Left cardiac atrium (tissue), 4 donors: ENCODE measurements at regions of chr4 and their contacts with region 1.

Region 1: DNA sequence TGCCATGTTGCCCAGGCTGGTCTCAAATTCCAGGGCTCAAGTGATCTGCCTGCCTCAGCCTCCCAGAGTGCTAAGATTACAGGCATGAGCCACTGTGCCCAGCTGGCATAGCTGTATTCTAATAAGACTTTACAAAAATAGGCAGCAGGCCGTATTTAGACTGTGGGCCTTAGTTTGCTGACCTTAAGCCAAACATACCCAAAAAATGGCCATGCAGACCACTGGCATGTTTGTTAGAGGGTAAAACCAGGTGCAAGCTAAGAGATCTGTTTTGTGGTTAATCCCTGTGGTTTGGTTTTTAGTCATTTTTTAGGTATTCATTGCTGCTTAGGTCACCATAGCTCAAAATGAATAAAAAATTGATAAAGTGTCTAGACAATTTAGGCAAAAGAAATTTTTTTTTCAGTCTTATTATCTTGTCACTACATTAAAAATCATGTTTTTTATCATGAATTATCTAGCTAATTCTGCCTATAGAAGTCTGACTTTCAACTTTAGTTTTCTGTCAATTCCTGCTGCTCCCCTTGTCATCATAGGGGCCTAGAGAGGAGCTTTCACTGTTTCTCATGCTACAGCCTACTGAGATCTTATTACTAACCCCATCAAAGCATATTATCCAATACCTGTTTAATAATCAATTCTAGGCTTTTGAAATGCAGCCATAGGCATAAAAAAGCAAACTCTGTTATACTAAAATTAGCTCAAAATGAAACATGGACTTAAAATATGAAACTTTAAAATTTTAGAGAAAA is 7.5 kb upstream of the SPINK2 start:
- DNase-seq: no peak
- ATAC-seq: no peak

Region 2: DNA sequence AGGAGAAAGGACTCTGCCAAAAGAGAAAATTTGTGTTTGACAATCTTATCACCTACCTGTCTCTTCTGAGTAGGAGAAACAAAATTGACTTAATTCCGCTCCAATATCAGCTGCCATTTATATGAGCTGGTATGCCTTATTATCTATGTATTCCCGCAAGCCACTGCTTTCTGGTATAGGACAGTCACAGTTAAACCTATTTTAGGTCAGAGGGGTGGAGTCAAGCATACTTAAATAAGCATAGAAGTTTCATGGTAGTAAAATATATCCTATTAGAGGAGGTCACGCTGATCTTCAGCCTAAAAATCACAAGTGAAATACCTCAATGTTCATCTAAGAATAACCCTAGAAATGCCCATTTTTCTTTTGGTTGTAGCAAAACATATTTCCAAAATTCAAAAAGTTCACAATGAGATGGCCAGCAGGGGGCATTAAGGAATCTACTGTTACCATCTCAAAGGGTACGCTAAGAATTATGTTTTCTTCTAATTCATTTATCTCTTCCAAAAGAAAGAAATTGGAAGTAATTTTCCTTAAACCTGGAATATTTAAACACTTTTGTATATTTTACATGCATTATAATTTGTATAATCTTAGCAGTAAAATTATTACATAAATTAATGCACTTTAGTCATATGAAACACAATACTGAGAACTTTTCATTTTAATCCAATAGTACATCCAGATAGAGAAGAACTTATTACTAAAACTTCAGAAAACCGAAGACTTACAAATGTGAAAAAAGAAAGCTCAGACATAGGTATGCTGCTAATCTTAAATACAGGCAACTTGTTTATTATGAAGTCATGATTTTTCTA is 404.1 kb before region 1 on chr4:
- intact Hi-C with region 1: loop called in 1 of 2 experiments (anchors 10 kb)
- DNase-seq: no peak
- ATAC-seq: peak in 1 of 2 donors; percentile 27

Region 3: DNA sequence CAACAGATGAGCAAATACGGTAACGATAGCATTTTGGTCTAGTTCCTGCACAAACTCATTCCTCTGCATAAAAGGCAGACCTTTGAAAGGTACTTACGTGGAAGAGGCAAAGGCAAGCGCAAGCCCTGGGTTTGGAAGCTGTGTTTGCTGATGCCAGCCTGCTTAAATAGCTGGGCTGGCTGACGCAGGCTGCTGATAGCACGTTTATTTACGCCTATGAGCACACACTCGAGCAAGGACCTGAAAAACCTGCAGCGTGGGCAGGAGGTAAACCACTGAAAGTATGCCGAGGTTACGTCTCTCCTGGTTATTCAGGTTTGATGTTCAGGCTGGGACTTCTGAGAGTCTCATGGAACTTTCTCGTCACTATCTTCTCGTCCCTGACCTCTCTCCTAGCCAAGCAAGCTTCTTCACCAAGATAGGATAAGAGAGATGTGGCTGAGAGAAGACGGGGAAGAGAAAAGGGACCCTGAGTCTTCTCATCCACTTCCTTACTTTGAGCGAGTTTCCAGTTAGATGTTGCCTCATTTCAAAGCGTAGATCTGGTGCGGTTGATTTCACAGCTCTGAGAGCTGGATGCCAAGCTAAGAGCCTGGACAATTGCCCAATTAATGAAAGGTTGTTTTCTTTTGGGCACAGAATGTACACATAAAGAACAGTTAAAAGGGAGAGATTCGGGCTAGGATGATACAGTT is 147.7 kb before region 1 on chr4 and contains the start of gene HOPX:
- intact Hi-C with region 1: no loop called
- DNase-seq: peak; percentile 29
- ATAC-seq: peak; percentile 63 to 90
- total RNA-seq, gene HOPX: 9.6 to 17.1 TPM